Activated CD8-positive, alpha-beta T cell treated with anti-CD3 and anti-CD28 coated beads for 36 hours (primary cell): ENCODE measurements at regions of chrX and their contacts with region 1.

Region 1: GRCh38 chrX:56813318-56813837 is 84.3 kb downstream of the NBDY start:
- DNase-seq: peak; percentile 69
- ATAC-seq: peak; percentile 80
- H3K4me3 Mint-ChIP-seq: peak overlapping the region; percentile 78
- H3K27ac Mint-ChIP-seq: peak overlapping the region; percentile 97
- H3K4me1 Mint-ChIP-seq: peaks cover 37% of the 10 kb centered on the region
- H3K27me3 Mint-ChIP-seq: no peaks in the 10 kb centered on the region
- CTCF ChIP-seq: no peak

Region 2: GRCh38 chrX:56563231-56564161 is 249.9 kb before region 1 on chrX and contains the start of gene UBQLN2:
- CTCF ChIA-PET with region 1: no interaction called
- POLR2A ChIA-PET with region 1: no interaction called
- intact Hi-C with region 1: loop called (anchors 10 kb)
- DNase-seq: peak; percentile 82
- ATAC-seq: peak; percentile 81
- H3K4me3 Mint-ChIP-seq: peak within 1 kb of the TSS; percentile 87
- H3K27ac Mint-ChIP-seq: peak within 1 kb of the TSS; percentile 98
- H3K4me1 Mint-ChIP-seq: peaks cover 2% of the 10 kb centered on the region
- H3K27me3 Mint-ChIP-seq: no peaks in the 10 kb centered on the region
- CTCF ChIP-seq: no peak
- total RNA-seq, gene UBQLN2: 31.9 to 33.0 TPM